ENCODE measurements at regions of chr13 and their contacts with region 1.

Region 1: DNA sequence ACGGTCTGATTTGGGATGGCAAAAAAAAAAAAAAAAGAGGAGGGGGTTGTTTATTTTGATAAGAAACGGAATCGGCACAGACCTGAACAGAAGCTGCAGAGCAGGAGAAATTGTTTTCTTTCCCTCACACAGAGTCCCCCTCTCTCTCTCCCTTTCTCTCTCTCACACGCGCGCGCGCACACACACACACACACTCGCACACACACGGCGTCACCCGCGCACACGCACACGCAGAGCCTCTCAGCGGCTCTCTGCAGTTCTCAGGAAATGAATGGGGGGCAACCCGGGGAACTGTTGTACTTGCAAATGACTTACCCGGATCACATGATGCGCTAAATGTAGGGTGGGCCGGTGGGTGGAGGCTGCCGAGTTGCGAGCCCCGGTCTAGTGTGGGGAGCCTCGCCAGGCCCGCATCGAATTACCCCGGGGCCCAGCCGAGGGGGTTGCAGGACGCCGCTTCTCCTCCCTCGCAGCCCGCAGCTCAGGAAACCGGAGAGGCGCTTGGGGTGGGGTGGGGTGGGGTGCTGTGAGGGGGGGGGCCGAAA is 475 bp downstream of the KLF12 start:
- DNase-seq: peak; percentile 72 to 94
- H3K4me3 ChIP-seq: peak overlapping the region; percentile 68
- CTCF ChIP-seq: no peak
- POLR2A ChIP-seq: no peak

Region 2: GRCh38 chr13:74287724-74288169 is 154.0 kb after region 1 on chr13:
- intact Hi-C with region 1: loop called (anchors 10 kb)
- DNase-seq: peak; percentile 42 to 89
- H3K4me3 ChIP-seq: no peak overlapping the region
- CTCF ChIP-seq: no peak
- POLR2A ChIP-seq: no peak

Measured in lower leg skin (tissue), 4 donors.